ENCODE measurements at regions of chr2 and their contacts with region 1.

Region 1: GRCh38 chr2:114316532-114317300 is 125.7 kb upstream of the DPP10 start:
- DNase-seq: no peak
- H3K4me3 ChIP-seq: no peak overlapping the region
- H3K27ac ChIP-seq: no peak overlapping the region
- H3K4me1 ChIP-seq: no peaks in the 10 kb centered on the region
- H3K27me3 ChIP-seq: no peaks in the 10 kb centered on the region
- CTCF ChIP-seq: no peak
- POLR2A ChIP-seq: no peak

Region 2: DNA sequence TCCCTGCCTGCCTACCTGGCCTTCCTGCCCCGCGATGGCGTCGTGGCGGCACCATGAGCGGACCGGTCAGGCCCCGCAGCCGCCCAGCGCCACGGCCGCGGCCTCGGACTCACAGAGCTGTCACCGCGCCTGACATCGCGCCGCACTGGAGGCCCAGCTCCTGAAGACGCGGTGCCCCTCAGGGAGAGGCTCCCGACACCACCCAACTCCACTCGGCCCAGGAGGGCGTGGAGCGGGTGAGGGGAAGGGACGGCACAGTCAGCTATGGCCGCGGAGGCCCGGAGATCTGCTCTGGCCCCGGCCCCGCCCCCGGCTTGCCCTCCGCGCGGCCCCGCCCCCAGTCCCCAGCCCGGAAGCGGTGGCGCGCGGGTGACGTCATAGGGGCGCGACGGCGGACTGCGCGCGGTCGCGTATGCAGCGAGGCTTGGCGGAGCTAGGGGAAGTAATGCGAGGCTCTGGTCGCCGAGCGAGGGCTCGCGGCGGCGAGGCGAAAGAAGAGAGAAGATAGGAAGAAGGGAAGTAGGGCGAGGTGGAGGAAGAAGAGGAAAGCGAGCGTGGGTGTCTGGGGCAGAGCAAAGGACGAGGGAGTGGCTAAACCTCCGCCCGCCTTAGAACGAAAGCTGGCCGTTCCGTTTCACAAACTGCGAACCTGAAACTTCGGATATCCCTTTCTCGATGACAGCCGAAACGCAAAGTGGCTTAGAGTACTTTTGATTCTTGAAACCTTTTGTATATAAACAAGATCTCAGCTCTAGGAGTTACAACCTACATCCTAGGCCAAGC is 560.2 kb before region 1 on chr2 and contains the start of gene SLC35F5:
- intact Hi-C with region 1: no loop called
- DNase-seq: peak; percentile 89 to 90
- H3K4me3 ChIP-seq: peak within 1 kb of the TSS; percentile 84 to 94 (median 86)
- H3K27ac ChIP-seq: peak within 1 kb of the TSS; percentile 95 to 98
- H3K4me1 ChIP-seq: no peaks in the 10 kb centered on the region
- H3K27me3 ChIP-seq: no peaks in the 10 kb centered on the region
- CTCF ChIP-seq: peak in 1 of 3 donors; percentile 21
- POLR2A ChIP-seq: peak; percentile 94
- total RNA-seq, gene SLC35F5: 77.8 to 135 (median 96.7) TPM

Region 3: DNA sequence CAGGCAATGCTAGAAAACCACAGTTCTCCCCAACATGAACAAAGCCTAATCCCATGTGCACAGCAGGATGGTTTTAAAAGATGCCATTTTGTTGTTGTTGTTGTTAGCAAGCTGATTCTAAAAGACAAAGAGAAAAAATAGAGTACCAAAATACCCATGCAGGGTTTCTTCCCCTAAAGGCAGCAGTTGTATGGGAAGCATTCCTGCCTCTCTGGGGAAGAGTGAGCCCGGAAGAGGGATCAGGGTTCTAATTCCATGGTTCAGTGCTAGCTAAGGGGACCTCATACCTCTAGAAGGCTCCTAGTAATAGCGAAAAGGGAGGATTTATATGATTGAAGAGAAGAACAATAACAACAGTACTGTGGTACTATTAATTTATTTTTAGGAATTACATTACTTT is 453.3 kb after region 1 on chr2:
- intact Hi-C with region 1: loop called (anchors 10 kb)
- DNase-seq: no peak
- H3K4me3 ChIP-seq: no peak overlapping the region
- H3K27ac ChIP-seq: no peak overlapping the region
- H3K4me1 ChIP-seq: no peaks in the 10 kb centered on the region
- H3K27me3 ChIP-seq: no peaks in the 10 kb centered on the region
- CTCF ChIP-seq: no peak
- POLR2A ChIP-seq: no peak